K562 (cell line): ENCODE measurements at regions of chr1 and their contacts with region 1.

Region 1: DNA sequence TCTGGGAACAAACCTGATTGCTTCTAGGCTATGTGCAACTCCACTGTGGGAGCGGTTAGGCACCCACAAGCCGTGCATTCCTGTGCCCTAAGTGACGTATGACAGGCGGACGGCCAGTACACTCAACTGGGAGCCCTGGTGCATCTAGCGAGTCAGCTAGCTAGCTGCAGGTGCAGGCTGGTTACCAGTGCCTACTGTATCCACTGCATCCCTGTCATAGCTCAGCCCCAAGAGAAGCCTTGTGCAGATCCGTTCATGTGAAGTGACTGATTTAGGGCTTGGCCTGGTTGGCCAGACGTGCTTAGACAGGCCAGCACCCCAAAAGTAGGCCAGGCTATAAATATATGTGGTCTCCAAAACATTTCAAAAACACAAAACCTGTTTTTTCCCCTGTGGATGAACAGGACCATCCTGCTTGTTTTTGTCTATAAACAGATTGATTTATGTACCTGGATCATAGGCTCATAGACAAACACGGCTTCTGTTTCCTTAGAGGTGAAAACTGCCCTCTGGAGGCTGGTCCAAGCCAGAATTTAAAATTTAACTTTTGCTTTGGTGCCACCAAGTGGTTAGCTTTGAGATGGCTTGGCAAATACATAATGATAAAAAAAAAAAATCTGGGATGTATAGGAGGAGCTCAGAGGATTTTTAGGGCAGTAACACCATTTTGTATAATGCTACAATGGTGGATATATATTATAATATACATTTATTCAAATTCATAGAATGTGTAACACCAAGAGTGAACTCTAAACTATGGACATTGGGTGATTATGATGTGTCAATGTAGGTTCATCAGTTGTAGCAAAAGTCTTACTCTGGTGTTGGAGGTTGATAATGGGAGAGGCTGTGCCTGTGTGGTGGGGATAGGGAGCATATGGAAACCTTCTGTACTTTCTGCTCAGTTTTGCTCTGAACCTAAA is 68.5 kb downstream of the GIPC2 start:
- DNase-seq: peak; percentile 37 to 83 (median 53)
- ATAC-seq: peak; percentile 93
- H3K4me3 ChIP-seq: no peak overlapping the region
- H3K27ac ChIP-seq: no peak overlapping the region
- H3K4me1 ChIP-seq: peaks cover 0 to 4% of the 10 kb centered on the region in 2 experiments; a peak in 3 of 5 replicates
- H3K27me3 ChIP-seq: no peaks in the 10 kb centered on the region
- CTCF ChIP-seq: peak; percentile 87 to 100 (median 99)
- EP300 ChIP-seq: no peak
- POLR2A ChIP-seq: no peak
- RAD21 ChIP-seq: peak; percentile 99 to 100

Region 2: DNA sequence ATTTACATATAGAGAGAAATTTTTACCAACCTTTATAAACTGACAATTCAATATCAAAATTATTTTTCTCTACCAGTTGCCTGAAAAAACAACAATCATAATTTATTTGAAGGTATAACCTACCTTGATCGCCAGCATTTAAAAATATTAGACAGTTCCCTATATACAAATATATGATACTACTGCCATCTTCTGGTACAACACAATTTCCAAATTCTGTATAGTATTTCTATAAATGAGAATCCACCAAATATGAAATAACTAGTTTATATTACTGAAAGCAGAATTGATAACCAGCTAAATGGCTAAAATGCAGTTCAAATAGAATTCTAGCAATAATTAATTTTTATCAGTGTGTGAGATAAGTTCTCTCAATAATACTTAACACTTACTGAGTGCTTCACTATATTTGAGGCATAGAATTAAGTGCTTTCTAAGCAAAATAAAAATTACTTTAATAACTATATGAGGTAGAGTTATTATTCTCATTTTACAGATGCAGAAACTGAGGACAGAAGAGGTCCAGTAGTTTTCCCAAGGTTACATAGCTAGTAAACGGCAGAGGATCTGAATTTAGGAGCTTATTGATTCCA is 970.7 kb before region 1 on chr1:
- CTCF ChIA-PET with region 1: interaction called, 21 read pairs
- POLR2A ChIA-PET with region 1: no interaction called
- in situ Hi-C with region 1: no loop called
- intact Hi-C with region 1: loop called (anchors 2 kb)
- DNase-seq: peak in 1 of 4 experiments; percentile 9
- ATAC-seq: no peak
- H3K4me3 ChIP-seq: no peak overlapping the region
- H3K27ac ChIP-seq: no peak overlapping the region
- H3K4me1 ChIP-seq: no peaks in the 10 kb centered on the region
- H3K27me3 ChIP-seq: no peaks in the 10 kb centered on the region
- CTCF ChIP-seq: peak in 1 of 3 experiments; percentile 49; a peak in 2 of 6 replicates
- EP300 ChIP-seq: no peak
- POLR2A ChIP-seq: no peak
- RAD21 ChIP-seq: peak; percentile 14; a peak in 1 of 4 replicates

Region 3: GRCh38 chr1:77514921-77515776 is 599.1 kb before region 1 on chr1:
- CTCF ChIA-PET with region 1: no interaction called
- POLR2A ChIA-PET with region 1: no interaction called
- in situ Hi-C with region 1: no loop called
- intact Hi-C with region 1: loop called (anchors 10 kb)
- DNase-seq: peak in 1 of 4 experiments; percentile 23
- ATAC-seq: peak; percentile 94
- H3K4me3 ChIP-seq: no peak overlapping the region
- H3K27ac ChIP-seq: no peak overlapping the region
- H3K4me1 ChIP-seq: no peaks in the 10 kb centered on the region
- H3K27me3 ChIP-seq: peaks cover 3 to 27% of the 10 kb centered on the region in 2 experiments; a peak in 2 of 5 replicates
- CTCF ChIP-seq: peak; percentile 28 to 46 (median 36); a peak in 4 of 6 replicates
- EP300 ChIP-seq: no peak
- POLR2A ChIP-seq: no peak
- RAD21 ChIP-seq: peak in 1 of 2 experiments; percentile 44; a peak in 2 of 4 replicates

Region 4: GRCh38 chr1:77825131-77825709 is 289.1 kb before region 1 on chr1:
- CTCF ChIA-PET with region 1: interaction called, 15 read pairs
- POLR2A ChIA-PET with region 1: no interaction called
- in situ Hi-C with region 1: no loop called
- intact Hi-C with region 1: loop called (anchors 2 kb)
- DNase-seq: peak in 1 of 4 experiments; percentile 45
- ATAC-seq: peak; percentile 82
- H3K4me3 ChIP-seq: no peak overlapping the region
- H3K27ac ChIP-seq: no peak overlapping the region
- H3K4me1 ChIP-seq: no peaks in the 10 kb centered on the region; a peak in 1 of 5 replicates
- H3K27me3 ChIP-seq: no peaks in the 10 kb centered on the region
- CTCF ChIP-seq: peak; percentile 23 to 51 (median 23); a peak in 3 of 6 replicates
- EP300 ChIP-seq: no peak
- POLR2A ChIP-seq: no peak
- RAD21 ChIP-seq: peak; percentile 40 to 54

Region 5: GRCh38 chr1:77978969-77979876 is 135.1 kb before region 1 on chr1 and contains the start of gene FUBP1:
- CTCF ChIA-PET with region 1: interaction called, 31 read pairs
- POLR2A ChIA-PET with region 1: interaction called, 8 read pairs
- in situ Hi-C with region 1: loop called (anchors 5 kb)
- intact Hi-C with region 1: loop called (anchors 1 kb)
- DNase-seq: peak; percentile 79 to 99 (median 84)
- ATAC-seq: peak; percentile 82
- H3K4me3 ChIP-seq: peak within 1 kb of the TSS; percentile 67
- H3K27ac ChIP-seq: peak within 1 kb of the TSS; percentile 96
- H3K4me1 ChIP-seq: peaks cover 0 to 5% of the 10 kb centered on the region in 2 experiments; a peak in 1 of 5 replicates
- H3K27me3 ChIP-seq: no peaks in the 10 kb centered on the region
- CTCF ChIP-seq: peak; percentile 67 to 83 (median 68)
- EP300 ChIP-seq: 0 out of 2 replicates have a peak, but pooled peaks have one; percentile 17
- POLR2A ChIP-seq: peak; percentile 98
- RAD21 ChIP-seq: peak; percentile 29 to 38; a peak in 3 of 4 replicates
- polyA plus RNA-seq, gene FUBP1: 104 to 170 TPM